Activated CD8-positive, alpha-beta T cell treated with anti-CD3 and anti-CD28 coated beads for 36 hours (primary cell): ENCODE measurements at regions of chr1 and their contacts with region 1.

Region 1: GRCh38 chr1:161117759-161118581 is at the starts of genes NIT1 and PFDN2:
- DNase-seq: peak; percentile 92
- ATAC-seq: peak; percentile 62
- H3K4me3 Mint-ChIP-seq: peak within 1 kb of the TSS; percentile 94
- H3K27ac Mint-ChIP-seq: peak within 1 kb of the TSS; percentile 92
- H3K4me1 Mint-ChIP-seq: peaks cover 70% of the 10 kb centered on the region
- H3K27me3 Mint-ChIP-seq: no peaks in the 10 kb centered on the region
- CTCF ChIP-seq: no peak
- total RNA-seq, gene NIT1: 38.5 to 40.0 TPM
- total RNA-seq, gene PFDN2: 137 to 144 TPM

Region 2: GRCh38 chr1:161045750-161046571 is 72.0 kb before region 1 on chr1 and contains the start of gene USF1:
- CTCF ChIA-PET with region 1: no interaction called
- POLR2A ChIA-PET with region 1: interaction called, 23 read pairs
- intact Hi-C with region 1: no loop called
- DNase-seq: peak; percentile 96
- ATAC-seq: peak; percentile 83
- H3K4me3 Mint-ChIP-seq: peak within 1 kb of the TSS; percentile 84
- H3K27ac Mint-ChIP-seq: peak within 1 kb of the TSS; percentile 98
- H3K4me1 Mint-ChIP-seq: peaks cover 36% of the 10 kb centered on the region
- H3K27me3 Mint-ChIP-seq: no peaks in the 10 kb centered on the region
- CTCF ChIP-seq: no peak
- total RNA-seq, gene USF1: 50.0 to 52.1 TPM

Region 3: GRCh38 chr1:161082991-161083742 is 34.8 kb before region 1 on chr1:
- CTCF ChIA-PET with region 1: no interaction called
- POLR2A ChIA-PET with region 1: no interaction called
- intact Hi-C with region 1: no loop called
- DNase-seq: no peak
- ATAC-seq: peak; percentile 55
- H3K4me3 Mint-ChIP-seq: no peak overlapping the region
- H3K27ac Mint-ChIP-seq: no peak overlapping the region
- H3K4me1 Mint-ChIP-seq: no peaks in the 10 kb centered on the region
- H3K27me3 Mint-ChIP-seq: no peaks in the 10 kb centered on the region
- CTCF ChIP-seq: no peak

Region 4: DNA sequence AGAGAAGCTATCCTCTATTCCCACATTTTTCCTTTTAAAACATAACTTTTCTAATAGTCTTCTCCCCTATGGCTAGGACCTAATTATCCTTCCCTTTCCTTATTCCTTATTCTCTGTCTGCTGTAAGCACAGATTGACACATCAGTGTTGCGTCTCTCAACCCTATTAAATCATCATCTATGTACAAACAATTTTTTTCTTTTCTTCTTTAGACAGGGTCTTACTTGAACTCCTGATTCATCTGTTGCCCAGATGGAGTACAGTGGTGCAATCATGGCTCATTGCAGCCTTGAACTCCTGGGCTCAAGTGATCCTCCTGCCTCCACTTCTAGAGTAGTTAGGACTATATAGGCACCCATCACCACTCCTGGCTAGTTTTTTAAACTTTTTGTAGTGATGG is 11.5 kb before region 1 on chr1:
- CTCF ChIA-PET with region 1: interaction called, 6 read pairs
- POLR2A ChIA-PET with region 1: interaction called, 12 read pairs
- intact Hi-C with region 1: no loop called
- DNase-seq: no peak
- ATAC-seq: no peak
- H3K4me3 Mint-ChIP-seq: no peak overlapping the region
- H3K27ac Mint-ChIP-seq: peak overlapping the region; percentile 11
- H3K4me1 Mint-ChIP-seq: peaks cover 27% of the 10 kb centered on the region
- H3K27me3 Mint-ChIP-seq: no peaks in the 10 kb centered on the region
- CTCF ChIP-seq: no peak

Region 5: GRCh38 chr1:161132410-161133219 is 14.6 kb after region 1 on chr1 and contains the start of gene DEDD:
- CTCF ChIA-PET with region 1: interaction called, 12 read pairs
- POLR2A ChIA-PET with region 1: interaction called, 13 read pairs
- intact Hi-C with region 1: no loop called
- DNase-seq: peak; percentile 95
- ATAC-seq: peak; percentile 95
- H3K4me3 Mint-ChIP-seq: no peak within 1 kb of the TSS
- H3K27ac Mint-ChIP-seq: no peak within 1 kb of the TSS
- H3K4me1 Mint-ChIP-seq: peaks cover 41% of the 10 kb centered on the region
- H3K27me3 Mint-ChIP-seq: no peaks in the 10 kb centered on the region
- CTCF ChIP-seq: no peak
- total RNA-seq, gene DEDD: 30.4 to 37.0 TPM

Region 6: DNA sequence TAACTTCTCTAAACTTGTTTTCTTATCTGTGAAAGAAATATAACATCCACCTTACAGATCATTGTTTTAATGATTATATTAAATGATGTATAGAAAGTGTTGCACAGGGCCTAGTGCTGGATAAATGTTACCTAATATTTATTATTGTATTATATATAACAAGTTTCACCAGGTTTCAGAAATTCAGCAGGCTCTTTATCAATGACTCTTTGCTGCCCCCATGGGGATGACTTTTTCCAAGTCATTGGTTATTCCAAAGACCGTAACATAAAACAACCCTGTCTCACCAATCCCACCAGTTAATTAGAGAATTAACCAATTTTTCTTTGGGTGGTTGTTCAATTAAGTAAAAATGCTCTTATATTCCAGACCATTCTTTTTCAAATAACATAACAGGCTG is 21.8 kb after region 1 on chr1:
- CTCF ChIA-PET with region 1: interaction called, 12 read pairs
- POLR2A ChIA-PET with region 1: interaction called, 11 read pairs
- intact Hi-C with region 1: no loop called
- DNase-seq: peak; percentile 65
- ATAC-seq: no peak
- H3K4me3 Mint-ChIP-seq: no peak overlapping the region
- H3K27ac Mint-ChIP-seq: no peak overlapping the region
- H3K4me1 Mint-ChIP-seq: peaks cover 6% of the 10 kb centered on the region
- H3K27me3 Mint-ChIP-seq: no peaks in the 10 kb centered on the region
- CTCF ChIP-seq: peak; percentile 74

Region 7: GRCh38 chr1:161688946-161689345 is 571.0 kb after region 1 on chr1:
- CTCF ChIA-PET with region 1: no interaction called
- POLR2A ChIA-PET with region 1: no interaction called
- intact Hi-C with region 1: no loop called
- DNase-seq: no peak
- ATAC-seq: no peak
- H3K4me3 Mint-ChIP-seq: no peak overlapping the region
- H3K27ac Mint-ChIP-seq: no peak overlapping the region
- H3K4me1 Mint-ChIP-seq: no peaks in the 10 kb centered on the region
- H3K27me3 Mint-ChIP-seq: peaks cover 9% of the 10 kb centered on the region
- CTCF ChIP-seq: no peak